Psoas muscle (tissue), 8 donors: ENCODE measurements at regions of chr3 and their contacts with region 1.

Region 1: DNA sequence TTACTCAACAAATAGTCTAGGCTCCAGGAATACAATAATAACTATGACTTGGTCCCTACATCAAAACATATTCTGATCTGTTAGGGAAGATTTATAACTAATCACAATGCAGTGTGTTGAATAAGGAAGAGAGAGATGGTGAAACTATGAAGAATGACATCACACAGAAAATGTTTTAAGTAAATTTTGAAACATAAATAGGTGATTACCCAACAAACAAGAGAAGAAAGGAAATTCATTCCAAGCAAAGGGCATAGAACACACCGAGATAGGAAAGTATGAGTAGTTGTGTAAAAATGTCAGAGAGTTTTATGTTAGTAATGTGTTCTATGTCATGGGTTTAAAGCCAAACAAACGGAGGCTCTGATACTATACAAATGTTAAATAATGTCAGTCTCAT is 13.4 kb downstream of the SEC62 start:
- DNase-seq: no peak
- ATAC-seq: no peak
- H3K4me3 ChIP-seq: no peak overlapping the region
- H3K27ac ChIP-seq: no peak overlapping the region
- H3K4me1 ChIP-seq: no peaks in the 10 kb centered on the region
- H3K27me3 ChIP-seq: no peaks in the 10 kb centered on the region
- CTCF ChIP-seq: no peak

Region 2: DNA sequence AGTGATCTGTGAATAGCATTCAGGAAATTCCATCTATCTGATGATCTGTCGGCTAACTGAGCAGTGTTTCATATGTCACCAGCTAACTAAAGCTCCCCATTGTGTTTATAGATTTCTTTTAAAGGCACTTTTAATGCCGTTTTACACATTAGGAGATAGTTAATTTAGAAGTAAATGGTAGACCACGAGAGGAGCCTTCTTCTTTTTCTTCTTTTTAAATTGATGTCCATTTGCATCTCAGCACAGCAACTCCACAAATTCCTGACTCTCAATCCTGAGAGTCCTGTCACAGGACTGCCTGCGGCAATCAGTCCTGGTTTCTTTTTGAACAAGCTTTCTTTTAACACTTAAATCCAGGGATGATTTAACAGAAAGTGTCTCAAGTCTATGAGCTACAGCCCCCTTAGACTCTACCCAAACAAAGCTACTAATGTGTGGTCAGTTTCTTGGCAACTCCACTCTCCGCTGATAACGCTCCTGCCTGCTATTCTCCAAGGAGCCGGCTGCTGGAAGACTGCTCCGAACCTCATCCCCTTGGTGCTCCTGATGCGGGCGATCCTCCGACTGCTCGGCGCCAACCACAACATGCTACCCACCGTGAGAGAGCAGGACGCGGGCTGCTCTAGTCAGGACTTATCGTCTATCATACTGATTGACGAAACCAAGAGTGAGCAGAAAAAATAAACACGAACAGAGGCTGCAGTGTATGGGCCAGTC is 737.9 kb before region 1 on chr3:
- intact Hi-C with region 1: no loop called
- DNase-seq: no peak
- ATAC-seq: no peak
- H3K4me3 ChIP-seq: peak overlapping the region; percentile 54
- H3K27ac ChIP-seq: peak overlapping the region; percentile 47
- H3K4me1 ChIP-seq: no peaks in the 10 kb centered on the region
- H3K27me3 ChIP-seq: peaks cover 0 to 7% (median 0%) of the 10 kb centered on the region in 3 donors
- CTCF ChIP-seq: no peak

Region 3: GRCh38 chr3:169863458-169863899 is 116.6 kb before region 1 on chr3:
- intact Hi-C with region 1: no loop called
- DNase-seq: peak in 1 of 2 donors; percentile 23
- ATAC-seq: peak; percentile 63 to 71 (median 68)
- H3K4me3 ChIP-seq: no peak overlapping the region
- H3K27ac ChIP-seq: no peak overlapping the region
- H3K4me1 ChIP-seq: no peaks in the 10 kb centered on the region
- H3K27me3 ChIP-seq: peaks cover 0 to 1% (median 0%) of the 10 kb centered on the region in 3 donors
- CTCF ChIP-seq: peak; percentile 87

Region 4: DNA sequence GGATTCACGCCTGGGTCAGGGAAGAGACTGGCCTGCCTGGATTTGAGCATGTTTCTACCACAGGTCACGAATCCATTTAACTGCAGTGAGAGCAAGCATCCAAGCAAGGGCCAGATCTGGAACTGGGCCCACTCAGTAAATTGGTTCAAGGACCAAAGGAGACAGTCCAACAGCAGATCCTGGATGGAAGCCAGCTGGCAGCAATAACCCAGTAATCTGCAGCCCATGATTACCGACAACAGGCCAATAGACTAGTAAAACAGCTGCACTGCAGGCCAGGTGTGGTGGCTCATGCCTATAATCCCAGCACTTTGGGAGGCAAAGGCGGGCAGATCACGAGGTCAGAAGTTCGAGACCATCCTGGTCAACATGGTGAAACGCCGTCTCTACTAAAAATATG is 56.9 kb before region 1 on chr3:
- intact Hi-C with region 1: no loop called
- DNase-seq: peak; percentile 35 to 58
- ATAC-seq: no peak
- H3K4me3 ChIP-seq: no peak overlapping the region
- H3K27ac ChIP-seq: no peak overlapping the region
- H3K4me1 ChIP-seq: no peaks in the 10 kb centered on the region
- H3K27me3 ChIP-seq: no peaks in the 10 kb centered on the region
- CTCF ChIP-seq: no peak

Region 5: GRCh38 chr3:170098753-170099152 is 118.7 kb after region 1 on chr3:
- intact Hi-C with region 1: loop called in 1 of 2 experiments (anchors 5 kb)
- DNase-seq: no peak
- ATAC-seq: no peak
- H3K4me3 ChIP-seq: no peak overlapping the region
- H3K27ac ChIP-seq: no peak overlapping the region
- H3K4me1 ChIP-seq: no peaks in the 10 kb centered on the region
- H3K27me3 ChIP-seq: no peaks in the 10 kb centered on the region
- CTCF ChIP-seq: no peak

Region 6: DNA sequence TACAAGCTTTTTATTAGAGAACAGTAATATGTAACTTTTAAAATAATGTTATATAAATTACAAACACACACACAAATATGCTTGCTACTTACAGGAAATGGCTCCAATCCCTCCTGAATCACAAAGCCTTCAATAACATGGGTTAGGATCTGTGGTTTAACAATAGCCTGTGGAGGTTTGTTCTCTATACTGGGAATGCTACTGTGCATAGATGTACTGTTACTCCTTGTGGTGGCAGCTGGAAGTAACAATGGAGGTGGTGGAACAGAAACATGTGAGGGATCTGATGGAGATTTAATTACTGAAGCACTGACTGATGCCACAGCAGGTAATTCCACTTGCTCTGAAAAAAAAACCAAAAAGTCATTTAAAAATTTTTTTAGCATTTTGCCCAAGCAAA is 137.1 kb after region 1 on chr3:
- intact Hi-C with region 1: loop called in 1 of 2 experiments (anchors 10 kb)
- DNase-seq: no peak
- ATAC-seq: no peak
- H3K4me3 ChIP-seq: no peak overlapping the region
- H3K27ac ChIP-seq: no peak overlapping the region
- H3K4me1 ChIP-seq: no peaks in the 10 kb centered on the region
- H3K27me3 ChIP-seq: no peaks in the 10 kb centered on the region
- CTCF ChIP-seq: no peak

Region 7: DNA sequence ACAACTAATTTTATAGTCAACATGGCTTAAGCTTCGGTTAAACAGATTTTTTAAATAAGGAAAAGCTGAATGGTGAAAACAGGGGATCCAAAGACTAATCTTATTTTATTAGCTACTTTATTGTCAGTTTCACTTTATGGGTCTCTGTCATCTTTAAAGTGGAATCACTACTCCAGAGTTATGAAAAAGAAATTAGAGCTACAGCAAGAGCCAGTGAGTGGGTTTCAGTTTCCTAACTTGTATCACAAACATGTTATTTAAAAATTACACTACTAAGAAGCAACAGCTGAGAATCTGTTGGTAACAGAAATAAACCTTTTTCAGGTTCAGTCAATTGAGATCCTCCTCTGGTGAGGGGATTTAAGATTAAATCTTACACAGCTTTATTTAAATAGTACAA is 191.5 kb after region 1 on chr3:
- intact Hi-C with region 1: loop called in 1 of 2 experiments (anchors 10 kb)
- DNase-seq: no peak
- ATAC-seq: no peak
- H3K4me3 ChIP-seq: no peak overlapping the region
- H3K27ac ChIP-seq: no peak overlapping the region
- H3K4me1 ChIP-seq: no peaks in the 10 kb centered on the region
- H3K27me3 ChIP-seq: no peaks in the 10 kb centered on the region
- CTCF ChIP-seq: no peak

Region 8: GRCh38 chr3:170321321-170322034 is 341.4 kb after region 1 on chr3:
- intact Hi-C with region 1: no loop called
- DNase-seq: no peak
- ATAC-seq: no peak
- H3K4me3 ChIP-seq: no peak overlapping the region
- H3K27ac ChIP-seq: no peak overlapping the region
- H3K4me1 ChIP-seq: no peaks in the 10 kb centered on the region
- H3K27me3 ChIP-seq: no peaks in the 10 kb centered on the region
- CTCF ChIP-seq: no peak